ENCODE measurements at regions of chr15 and their contacts with region 1.

Region 1: GRCh38 chr15:78195735-78196201 is 38.6 kb downstream of the ACSBG1 start:
- DNase-seq: peak; percentile 22 to 61 (median 46)
- ATAC-seq: peak; percentile 82
- H3K4me3 ChIP-seq: no peak overlapping the region
- H3K4me3 Mint-ChIP-seq: no peak overlapping the region
- H3K27ac ChIP-seq: no peak overlapping the region
- H3K27ac Mint-ChIP-seq: peak overlapping the region in 1 of 9 donors; percentile 36
- H3K4me1 ChIP-seq: no peaks in the 10 kb centered on the region
- H3K4me1 Mint-ChIP-seq: peaks cover 0 to 9% (median 0%) of the 10 kb centered on the region in 7 donors
- H3K27me3 ChIP-seq: no peaks in the 10 kb centered on the region
- H3K27me3 Mint-ChIP-seq: peaks cover 0 to 11% (median 0%) of the 10 kb centered on the region in 5 donors

Region 2: DNA sequence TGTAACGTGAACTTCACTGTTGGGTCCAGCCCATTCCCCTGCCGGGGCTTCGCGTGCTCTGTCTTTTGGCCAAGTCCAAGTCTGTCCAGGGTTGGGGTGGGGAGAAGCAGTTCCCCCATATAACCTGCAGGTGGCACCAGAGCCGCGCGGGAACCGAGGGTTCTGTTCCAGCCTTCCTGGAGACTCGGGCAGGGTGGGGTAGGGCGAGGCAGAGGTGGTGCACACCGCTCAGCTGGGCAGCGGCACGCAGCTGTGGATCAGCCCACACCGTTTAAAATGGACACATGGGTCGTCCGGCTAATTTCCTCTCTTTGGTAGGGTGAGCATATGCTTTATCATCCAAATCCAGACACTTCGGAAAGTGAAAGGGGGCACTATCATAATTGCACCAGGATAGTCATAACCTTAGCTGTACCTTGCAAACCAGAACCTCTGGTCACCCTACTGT is 236.3 kb before region 1 on chr15:
- CTCF ChIA-PET with region 1: interaction called, 19 read pairs
- POLR2A ChIA-PET with region 1: no interaction called
- intact Hi-C with region 1: loop called (anchors 2 kb)
- DNase-seq: peak; percentile 41 to 81 (median 57)
- ATAC-seq: peak; percentile 97
- H3K4me3 ChIP-seq: no peak overlapping the region
- H3K4me3 Mint-ChIP-seq: peak overlapping the region in 5 of 10 donors; percentile 14 to 52 (median 35)
- H3K27ac ChIP-seq: no peak overlapping the region
- H3K27ac Mint-ChIP-seq: no peak overlapping the region
- H3K4me1 ChIP-seq: peaks cover 0 to 4% of the 10 kb centered on the region in 2 donors
- H3K4me1 Mint-ChIP-seq: peaks cover 0 to 17% (median 4%) of the 10 kb centered on the region in 7 donors
- H3K27me3 ChIP-seq: no peaks in the 10 kb centered on the region
- H3K27me3 Mint-ChIP-seq: peaks cover 5 to 38% (median 7%) of the 10 kb centered on the region in 5 donors

Region 3: DNA sequence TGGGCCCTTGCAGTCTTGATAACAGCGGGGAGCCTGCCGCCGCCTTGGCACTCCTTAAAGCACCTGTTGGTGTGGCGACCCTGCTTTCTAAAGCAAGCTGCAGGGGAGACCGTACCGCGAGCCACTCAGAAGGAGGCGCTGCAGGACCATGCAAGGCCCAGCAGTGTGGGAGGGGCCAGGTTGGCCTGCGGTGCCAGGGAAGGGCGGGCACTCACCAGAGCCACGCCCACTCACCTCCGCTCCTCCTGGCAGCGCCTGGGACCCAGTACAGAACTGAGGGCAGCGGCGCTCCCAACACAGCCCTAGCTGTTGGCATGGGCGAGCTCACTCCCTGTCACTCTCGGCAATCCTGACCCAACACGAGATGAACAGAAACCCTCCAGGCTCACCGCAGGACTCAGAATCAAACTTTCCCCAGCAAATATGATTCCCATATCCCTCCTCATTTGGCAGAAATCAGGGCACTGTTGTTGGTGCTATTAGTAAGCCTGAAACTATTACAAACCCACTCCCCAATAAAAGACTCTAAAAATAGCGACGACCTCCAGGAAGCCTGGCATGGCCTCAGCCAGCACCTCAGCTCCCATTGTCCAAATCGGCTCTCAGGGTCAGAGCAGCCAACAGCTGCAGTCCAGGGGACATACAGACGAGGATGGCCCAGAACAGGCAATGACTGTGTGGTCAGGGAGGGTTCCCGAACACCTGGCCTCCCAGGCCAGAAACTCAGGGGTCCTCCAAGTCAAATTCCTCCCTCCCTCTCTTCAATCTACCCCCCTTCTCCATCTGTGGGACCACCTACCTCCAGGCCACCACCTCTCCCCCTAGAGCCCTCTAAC is 195.5 kb before region 1 on chr15:
- CTCF ChIA-PET with region 1: interaction called, 3 read pairs
- POLR2A ChIA-PET with region 1: no interaction called
- intact Hi-C with region 1: loop called in 1 of 2 experiments (anchors 1 kb)
- DNase-seq: peak; percentile 66 to 82 (median 78)
- ATAC-seq: peak; percentile 100
- H3K4me3 ChIP-seq: no peak overlapping the region
- H3K4me3 Mint-ChIP-seq: no peak overlapping the region
- H3K27ac ChIP-seq: no peak overlapping the region
- H3K27ac Mint-ChIP-seq: peak overlapping the region; percentile 19 to 87 (median 68)
- H3K4me1 ChIP-seq: no peaks in the 10 kb centered on the region
- H3K4me1 Mint-ChIP-seq: peaks cover 0 to 26% (median 5%) of the 10 kb centered on the region in 7 donors
- H3K27me3 ChIP-seq: no peaks in the 10 kb centered on the region
- H3K27me3 Mint-ChIP-seq: no peaks in the 10 kb centered on the region

Region 4: GRCh38 chr15:78101463-78102139 is 94.2 kb before region 1 on chr15:
- CTCF ChIA-PET with region 1: no interaction called
- POLR2A ChIA-PET with region 1: no interaction called
- intact Hi-C with region 1: no loop called
- DNase-seq: no peak
- ATAC-seq: no peak
- H3K4me3 ChIP-seq: no peak overlapping the region
- H3K4me3 Mint-ChIP-seq: no peak overlapping the region
- H3K27ac ChIP-seq: no peak overlapping the region
- H3K27ac Mint-ChIP-seq: peak overlapping the region in 2 of 9 donors; percentile 41 to 51
- H3K4me1 ChIP-seq: peaks cover 33 to 41% of the 10 kb centered on the region in 2 donors
- H3K4me1 Mint-ChIP-seq: peaks cover 29 to 54% (median 33%) of the 10 kb centered on the region in 7 donors
- H3K27me3 ChIP-seq: no peaks in the 10 kb centered on the region
- H3K27me3 Mint-ChIP-seq: no peaks in the 10 kb centered on the region

Region 5: DNA sequence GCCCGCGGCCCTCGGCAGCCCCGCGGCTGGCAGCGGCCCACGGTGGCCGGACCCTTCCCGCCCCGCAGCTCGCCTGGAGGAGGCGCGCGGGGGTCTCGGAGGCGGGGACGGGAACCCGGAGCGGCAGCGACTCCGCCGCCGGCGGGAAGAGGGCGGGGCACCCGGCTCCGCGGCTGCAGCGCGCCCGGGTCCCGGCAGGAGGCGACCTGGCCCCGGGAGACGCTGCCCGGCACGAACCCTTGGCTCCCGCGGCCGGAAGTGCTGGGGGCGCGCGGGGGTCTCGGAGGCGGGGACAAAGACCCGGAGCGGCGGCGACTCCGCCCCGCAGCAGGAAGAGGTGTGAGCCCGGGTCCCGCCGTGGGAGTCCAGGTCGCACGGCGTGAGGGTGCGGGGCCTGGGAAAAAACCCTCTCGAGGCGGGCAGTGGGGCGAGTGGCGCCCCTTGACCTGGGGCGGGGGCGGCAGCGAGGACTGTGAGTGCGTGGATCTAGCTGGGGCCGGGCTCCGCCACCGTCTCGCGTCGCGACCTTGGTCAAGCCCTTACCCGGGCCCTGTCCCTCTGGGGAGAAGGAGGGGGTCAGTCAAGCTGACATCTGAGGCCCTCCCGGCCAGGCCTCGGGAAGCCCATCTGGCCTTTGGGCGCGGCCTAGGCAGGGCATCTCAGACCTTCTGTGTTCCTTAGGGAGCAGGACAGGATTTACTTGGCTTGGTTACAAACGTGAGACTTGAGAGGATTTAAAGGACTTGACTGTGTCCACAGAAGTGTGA is 64.3 kb before region 1 on chr15 and contains the start of gene CIB2:
- CTCF ChIA-PET with region 1: interaction called, 38 read pairs
- POLR2A ChIA-PET with region 1: interaction called, 3 read pairs
- intact Hi-C with region 1: loop called (anchors 1 kb)
- DNase-seq: peak; percentile 67 to 90 (median 78)
- ATAC-seq: peak; percentile 90
- H3K4me3 ChIP-seq: peak within 1 kb of the TSS; percentile 74
- H3K4me3 Mint-ChIP-seq: peak within 1 kb of the TSS; percentile 80 to 89 (median 84)
- H3K27ac ChIP-seq: peak within 1 kb of the TSS; percentile 86
- H3K27ac Mint-ChIP-seq: peak within 1 kb of the TSS; percentile 68 to 93 (median 89)
- H3K4me1 ChIP-seq: peaks cover 10 to 11% of the 10 kb centered on the region in 2 donors
- H3K4me1 Mint-ChIP-seq: peaks cover 10 to 37% (median 21%) of the 10 kb centered on the region in 7 donors
- H3K27me3 ChIP-seq: no peaks in the 10 kb centered on the region
- H3K27me3 Mint-ChIP-seq: peaks cover 0 to 2% (median 0%) of the 10 kb centered on the region in 5 donors
- total RNA-seq, gene CIB2: 1.0 to 2.0 (median 1.7) TPM

Region 6: GRCh38 chr15:78177447-78177873 is 18.3 kb before region 1 on chr15:
- CTCF ChIA-PET with region 1: no interaction called
- POLR2A ChIA-PET with region 1: no interaction called
- intact Hi-C with region 1: loop called in 1 of 2 experiments (anchors 1 kb)
- DNase-seq: peak in 2 of 9 donors; percentile 23 to 40
- ATAC-seq: peak; percentile 44
- H3K4me3 ChIP-seq: no peak overlapping the region
- H3K4me3 Mint-ChIP-seq: no peak overlapping the region
- H3K27ac ChIP-seq: no peak overlapping the region
- H3K27ac Mint-ChIP-seq: no peak overlapping the region
- H3K4me1 ChIP-seq: peaks cover 0 to 17% of the 10 kb centered on the region in 2 donors
- H3K4me1 Mint-ChIP-seq: peaks cover 19 to 31% (median 24%) of the 10 kb centered on the region in 7 donors
- H3K27me3 ChIP-seq: no peaks in the 10 kb centered on the region
- H3K27me3 Mint-ChIP-seq: no peaks in the 10 kb centered on the region

Measured in naive thymus-derived CD4-positive, alpha-beta T cell (primary cell).